GM12878 (cell line): ENCODE measurements at regions of chr11 and their contacts with region 1.

Region 1: DNA sequence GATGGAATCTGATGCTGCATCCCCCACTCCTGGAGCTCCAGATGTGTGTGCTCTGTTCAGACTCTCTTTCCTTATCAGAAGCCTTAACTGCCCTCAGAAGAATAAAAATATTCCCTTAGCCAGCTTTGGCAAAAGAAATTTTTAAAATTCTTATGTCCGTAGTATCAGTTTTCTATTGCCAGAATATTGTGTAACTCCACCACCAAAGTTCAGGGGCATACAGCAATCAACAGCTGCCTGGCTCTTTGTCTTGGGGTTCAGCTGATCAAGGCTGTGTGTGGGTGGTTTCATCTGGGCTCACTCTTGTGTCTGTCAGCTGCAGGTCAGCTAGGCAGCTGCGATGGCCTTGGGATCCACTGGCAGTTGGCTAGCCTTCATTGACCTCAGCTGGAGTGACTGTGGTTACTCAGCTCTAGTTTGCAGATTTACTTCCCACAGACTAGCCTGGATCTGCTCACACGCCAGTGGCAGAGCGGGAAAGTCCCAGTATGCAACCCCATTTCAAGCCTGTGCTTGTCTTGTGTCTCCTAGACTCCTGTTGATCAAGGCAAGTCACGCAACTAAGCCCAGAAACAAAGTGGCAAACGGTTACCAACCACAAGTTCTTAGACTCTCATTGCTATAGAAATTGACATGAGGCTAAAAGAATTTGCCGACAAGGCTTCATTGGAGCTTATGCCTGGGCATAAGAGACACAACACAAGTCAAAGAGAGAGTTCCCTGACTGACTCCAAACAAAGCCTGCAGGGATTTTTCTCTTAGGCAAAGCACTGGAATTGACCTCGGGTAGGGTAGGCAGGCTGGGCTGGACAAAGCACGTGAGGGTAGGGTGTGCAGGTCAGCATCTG is 7.4 kb downstream of the TMEM138 start:
- DNase-seq: peak; percentile 77
- ATAC-seq: peak; percentile 86
- H3K4me3 ChIP-seq: no peak overlapping the region
- H3K27ac ChIP-seq: peak overlapping the region; percentile 68
- H3K4me1 ChIP-seq: peaks cover 8% of the 10 kb centered on the region
- H3K27me3 ChIP-seq: no peaks in the 10 kb centered on the region
- CTCF ChIP-seq: no peak
- EP300 ChIP-seq: peak; percentile 92 to 93
- POLR2A ChIP-seq: peak; percentile 43; the same call in 1 of the 2 replicates
- RAD21 ChIP-seq: no peak

Region 2: GRCh38 chr11:61418136-61418535 is 48.5 kb after region 1 on chr11:
- CTCF ChIA-PET with region 1: no interaction called
- POLR2A ChIA-PET with region 1: no interaction called
- RAD21 ChIA-PET with region 1: no interaction called
- SMC1A ChIA-PET with region 1: no interaction called
- in situ Hi-C with region 1: no loop called
- intact Hi-C with region 1: no loop called
- DNase-seq: no peak
- ATAC-seq: no peak
- H3K4me3 ChIP-seq: no peak overlapping the region
- H3K27ac ChIP-seq: no peak overlapping the region
- H3K4me1 ChIP-seq: no peaks in the 10 kb centered on the region
- H3K27me3 ChIP-seq: no peaks in the 10 kb centered on the region
- CTCF ChIP-seq: no peak
- EP300 ChIP-seq: no peak
- POLR2A ChIP-seq: no peak
- RAD21 ChIP-seq: no peak

Region 3: DNA sequence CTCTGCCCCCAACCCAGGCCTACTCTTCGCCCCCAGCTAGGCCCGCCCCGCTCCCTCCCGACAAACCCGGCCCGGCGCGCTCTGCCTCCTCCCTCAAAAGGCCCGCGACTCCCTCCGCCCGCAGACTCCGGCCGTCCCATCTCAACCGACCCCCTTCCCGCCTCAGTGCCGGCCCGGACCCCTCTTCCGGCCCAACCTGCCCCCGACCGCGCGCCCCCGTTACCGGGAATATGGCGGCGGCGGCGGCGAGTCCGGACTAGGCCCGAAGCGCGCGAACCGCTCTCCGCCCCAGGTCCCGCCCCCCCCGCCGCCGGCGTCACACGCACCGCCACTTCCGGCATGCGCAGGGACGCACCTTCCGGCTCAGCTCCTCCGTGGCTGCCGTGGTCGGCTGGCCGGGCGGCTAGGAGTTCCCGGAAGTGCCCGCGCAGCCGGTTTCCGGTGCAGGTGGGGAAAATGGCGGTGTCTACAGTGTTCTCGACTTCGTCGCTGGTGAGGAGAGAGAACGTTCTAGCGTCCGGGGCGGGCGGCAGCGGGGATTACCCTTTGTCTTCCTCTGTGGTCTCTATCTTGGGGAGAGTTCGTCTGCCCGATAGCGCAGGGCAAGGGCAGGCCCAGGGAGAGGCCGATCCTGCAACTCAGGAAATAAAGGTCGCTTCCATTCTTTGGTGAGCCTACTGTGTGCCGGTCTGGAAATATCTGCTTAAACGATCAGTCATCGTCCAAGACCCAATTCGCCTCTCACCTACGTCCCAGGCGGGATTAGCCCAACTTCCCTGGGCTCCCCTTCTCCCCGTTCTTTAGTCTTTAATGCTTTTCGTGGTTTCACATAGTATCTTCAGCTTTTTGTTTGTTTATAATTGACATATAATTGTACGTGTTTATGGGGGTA is 60.3 kb after region 1 on chr11 and contains the starts of genes CPSF7 and SDHAF2:
- CTCF ChIA-PET with region 1: interaction called, 10 read pairs
- POLR2A ChIA-PET with region 1: interaction called, 5 read pairs
- RAD21 ChIA-PET with region 1: no interaction called
- SMC1A ChIA-PET with region 1: no interaction called
- in situ Hi-C with region 1: no loop called
- intact Hi-C with region 1: no loop called
- DNase-seq: peak; percentile 69
- ATAC-seq: peak; percentile 93
- H3K4me3 ChIP-seq: peak within 1 kb of the TSS; percentile 87
- H3K27ac ChIP-seq: peak within 1 kb of the TSS; percentile 99
- H3K4me1 ChIP-seq: peaks cover 7% of the 10 kb centered on the region
- H3K27me3 ChIP-seq: no peaks in the 10 kb centered on the region
- CTCF ChIP-seq: no peak
- EP300 ChIP-seq: no peak
- POLR2A ChIP-seq: peak; percentile 93
- RAD21 ChIP-seq: no peak
- polyA plus RNA-seq, gene CPSF7: 14.9 to 21.9 TPM
- polyA plus RNA-seq, gene SDHAF2: 155 to 160 TPM

Region 4: DNA sequence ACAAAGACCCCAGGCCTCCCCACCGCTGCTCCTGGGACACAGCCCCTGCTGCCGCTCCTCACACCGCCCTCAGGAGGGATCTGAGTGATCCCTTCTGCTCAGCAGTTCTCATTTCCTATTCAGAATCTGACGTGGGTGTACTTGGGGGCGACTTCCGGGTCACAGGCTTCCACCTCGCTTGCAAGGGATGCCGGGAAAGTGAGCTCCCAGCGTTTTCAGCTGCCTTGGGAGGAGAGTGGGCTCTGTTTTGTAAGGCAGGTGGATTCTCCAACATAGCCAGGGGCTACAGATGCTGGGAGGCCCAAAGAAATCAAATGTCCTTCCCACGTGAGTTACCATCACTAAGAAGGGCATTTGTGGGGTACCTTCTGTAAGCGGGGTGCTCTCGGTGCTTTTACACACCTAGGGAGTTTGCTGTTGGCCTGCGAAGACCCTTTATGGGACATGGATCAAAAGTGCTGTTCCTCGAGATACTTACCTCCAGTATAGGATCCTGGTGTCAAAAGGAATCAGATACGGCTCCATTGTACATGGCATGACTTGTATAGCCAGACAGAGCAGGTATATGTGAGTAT is 129.3 kb after region 1 on chr11:
- CTCF ChIA-PET with region 1: no interaction called
- POLR2A ChIA-PET with region 1: no interaction called
- RAD21 ChIA-PET with region 1: no interaction called
- SMC1A ChIA-PET with region 1: no interaction called
- in situ Hi-C with region 1: no loop called
- intact Hi-C with region 1: no loop called
- DNase-seq: no peak
- ATAC-seq: no peak
- H3K4me3 ChIP-seq: no peak overlapping the region
- H3K27ac ChIP-seq: no peak overlapping the region
- H3K4me1 ChIP-seq: no peaks in the 10 kb centered on the region
- H3K27me3 ChIP-seq: no peaks in the 10 kb centered on the region
- CTCF ChIP-seq: no peak
- EP300 ChIP-seq: no peak
- POLR2A ChIP-seq: no peak; the same call in 1 of the 2 replicates
- RAD21 ChIP-seq: no peak

Region 5: GRCh38 chr11:61509043-61510029 is 139.7 kb after region 1 on chr11:
- CTCF ChIA-PET with region 1: no interaction called
- POLR2A ChIA-PET with region 1: no interaction called
- RAD21 ChIA-PET with region 1: no interaction called
- SMC1A ChIA-PET with region 1: no interaction called
- in situ Hi-C with region 1: no loop called
- intact Hi-C with region 1: no loop called
- DNase-seq: no peak
- ATAC-seq: peak; percentile 97
- H3K4me3 ChIP-seq: no peak overlapping the region
- H3K27ac ChIP-seq: no peak overlapping the region
- H3K4me1 ChIP-seq: no peaks in the 10 kb centered on the region
- H3K27me3 ChIP-seq: peaks cover 10 to 14% of the 10 kb centered on the region in 2 experiments
- CTCF ChIP-seq: peak; percentile 27 to 46 (median 36); a peak in 5 of 6 replicates
- EP300 ChIP-seq: no peak
- POLR2A ChIP-seq: no peak
- RAD21 ChIP-seq: no peak